ENCODE measurements at regions of chr1 and their contacts with region 1.

Region 1: GRCh38 chr1:212791676-212792395 is at the starts of genes NSL1 and TATDN3:
- DNase-seq: peak; percentile 98
- H3K4me3 Mint-ChIP-seq: peak within 1 kb of the TSS; percentile 83
- H3K27ac Mint-ChIP-seq: peak within 1 kb of the TSS; percentile 90
- H3K4me1 Mint-ChIP-seq: peaks cover 19% of the 10 kb centered on the region
- H3K27me3 Mint-ChIP-seq: no peaks in the 10 kb centered on the region
- CTCF ChIP-seq: no peak
- total RNA-seq, gene NSL1: 39.7 and 42.2 TPM in 2 replicates
- total RNA-seq, gene TATDN3: 31.5 and 35.7 TPM in 2 replicates

Region 2: DNA sequence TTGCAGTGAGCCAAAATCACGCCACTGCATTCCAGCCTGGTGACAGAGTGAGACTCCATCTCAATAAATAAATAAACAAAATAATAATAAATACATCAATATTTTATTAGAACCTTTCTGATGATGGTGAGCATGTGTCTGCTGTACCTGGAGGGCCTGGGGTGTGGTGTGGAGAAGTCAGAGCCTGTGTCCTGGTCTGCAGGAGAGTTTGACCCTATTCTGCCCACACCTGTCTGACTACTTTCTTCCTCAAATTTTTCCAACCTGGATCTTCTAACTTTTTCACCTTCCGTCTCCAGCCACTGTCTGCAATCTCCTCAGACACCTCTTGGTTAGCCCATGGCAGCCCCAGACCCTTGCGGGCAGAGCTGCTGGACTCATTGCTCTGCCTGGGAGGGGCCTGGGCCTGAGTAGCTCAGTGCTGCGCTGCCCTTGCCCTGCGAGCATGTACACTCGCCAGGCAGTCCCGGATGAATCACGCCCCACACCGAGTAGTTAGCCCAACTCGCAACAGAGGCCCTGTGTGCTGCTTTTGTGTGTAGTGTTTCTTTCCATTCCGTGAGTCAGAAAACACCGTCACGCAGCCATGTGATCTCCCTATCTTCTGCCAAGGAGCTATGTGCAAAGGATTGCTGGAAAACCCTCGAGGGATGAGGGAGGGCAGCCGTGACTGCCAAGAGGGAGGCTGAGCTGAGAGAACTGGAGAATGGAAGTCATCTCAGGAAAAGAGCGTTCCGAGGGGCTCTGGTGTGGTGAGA is 322.0 kb before region 1 on chr1:
- CTCF ChIA-PET with region 1: no interaction called
- POLR2A ChIA-PET with region 1: interaction called, 29 read pairs
- intact Hi-C with region 1: no loop called
- DNase-seq: peak; percentile 96
- H3K4me3 Mint-ChIP-seq: peak overlapping the region; percentile 49
- H3K27ac Mint-ChIP-seq: peak overlapping the region; percentile 90
- H3K4me1 Mint-ChIP-seq: peaks cover 10% of the 10 kb centered on the region
- H3K27me3 Mint-ChIP-seq: no peaks in the 10 kb centered on the region
- CTCF ChIP-seq: no peak

Region 3: DNA sequence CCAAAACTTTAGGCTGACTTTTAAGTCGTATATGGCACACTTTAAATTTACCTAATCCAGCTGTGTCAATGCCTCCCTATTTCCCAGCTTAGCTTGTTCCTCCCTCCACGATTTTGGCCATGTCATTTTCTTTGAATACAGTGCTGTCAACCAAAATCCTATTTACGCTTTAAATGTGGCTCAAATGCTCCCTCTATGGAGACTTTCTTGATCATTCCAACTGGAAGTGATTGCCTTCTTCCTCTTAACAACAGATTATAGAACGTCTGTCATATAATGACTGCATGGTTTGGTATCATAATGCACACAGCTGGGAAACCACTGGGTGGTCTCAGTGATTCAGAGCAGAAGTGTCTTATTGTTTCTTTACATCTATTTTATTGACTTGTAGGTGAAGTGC is 73.3 kb before region 1 on chr1:
- CTCF ChIA-PET with region 1: no interaction called
- POLR2A ChIA-PET with region 1: no interaction called
- intact Hi-C with region 1: no loop called
- DNase-seq: peak; percentile 42
- H3K4me3 Mint-ChIP-seq: no peak overlapping the region
- H3K27ac Mint-ChIP-seq: no peak overlapping the region
- H3K4me1 Mint-ChIP-seq: peaks cover 18% of the 10 kb centered on the region
- H3K27me3 Mint-ChIP-seq: peaks cover 39% of the 10 kb centered on the region
- CTCF ChIP-seq: no peak

Region 4: GRCh38 chr1:212743901-212744475 is 47.8 kb before region 1 on chr1:
- CTCF ChIA-PET with region 1: interaction called, 4 read pairs
- POLR2A ChIA-PET with region 1: interaction called, 24 read pairs
- intact Hi-C with region 1: no loop called
- DNase-seq: no peak
- H3K4me3 Mint-ChIP-seq: no peak overlapping the region
- H3K27ac Mint-ChIP-seq: no peak overlapping the region
- H3K4me1 Mint-ChIP-seq: no peaks in the 10 kb centered on the region
- H3K27me3 Mint-ChIP-seq: no peaks in the 10 kb centered on the region
- CTCF ChIP-seq: no peak

Region 5: GRCh38 chr1:212774584-212774983 is 17.3 kb before region 1 on chr1:
- CTCF ChIA-PET with region 1: interaction called, 6 read pairs
- POLR2A ChIA-PET with region 1: interaction called, 18 read pairs
- intact Hi-C with region 1: no loop called
- DNase-seq: peak; percentile 57
- H3K4me3 Mint-ChIP-seq: no peak overlapping the region
- H3K27ac Mint-ChIP-seq: no peak overlapping the region
- H3K4me1 Mint-ChIP-seq: peaks cover 9% of the 10 kb centered on the region
- H3K27me3 Mint-ChIP-seq: no peaks in the 10 kb centered on the region
- CTCF ChIP-seq: no peak

Region 6: GRCh38 chr1:212857992-212858460 is 66.2 kb after region 1 on chr1 and contains the start of gene FLVCR1:
- CTCF ChIA-PET with region 1: interaction called, 7 read pairs
- POLR2A ChIA-PET with region 1: interaction called, 134 read pairs
- intact Hi-C with region 1: loop called (anchors 1 kb)
- DNase-seq: peak; percentile 100
- H3K4me3 Mint-ChIP-seq: no peak within 1 kb of the TSS
- H3K27ac Mint-ChIP-seq: peak within 1 kb of the TSS; percentile 99
- H3K4me1 Mint-ChIP-seq: peaks cover 11% of the 10 kb centered on the region
- H3K27me3 Mint-ChIP-seq: no peaks in the 10 kb centered on the region
- CTCF ChIP-seq: no peak
- total RNA-seq, gene FLVCR1: 16.5 and 17.9 TPM in 2 replicates

Region 7: DNA sequence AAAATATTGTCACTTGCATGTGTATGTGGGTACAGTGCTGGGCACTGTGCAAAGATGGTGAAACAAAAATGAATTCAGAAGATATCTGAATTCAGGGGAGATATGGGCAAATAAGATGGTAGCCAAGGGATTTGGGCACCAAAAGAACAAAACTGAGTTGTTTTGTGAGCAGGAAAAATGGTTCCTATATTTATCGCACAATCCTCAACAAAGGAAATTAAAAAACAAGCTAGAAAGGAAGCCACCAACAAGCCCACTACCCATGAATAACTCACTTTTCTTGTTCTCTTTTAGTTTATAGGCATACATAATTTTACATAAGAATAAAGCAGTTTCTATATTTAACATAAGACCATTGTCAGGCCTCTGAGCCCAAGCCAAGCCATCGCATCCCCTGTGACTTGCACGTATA is 117.8 kb after region 1 on chr1:
- CTCF ChIA-PET with region 1: no interaction called
- POLR2A ChIA-PET with region 1: no interaction called
- intact Hi-C with region 1: no loop called
- DNase-seq: no peak
- H3K4me3 Mint-ChIP-seq: no peak overlapping the region
- H3K27ac Mint-ChIP-seq: no peak overlapping the region
- H3K4me1 Mint-ChIP-seq: no peaks in the 10 kb centered on the region
- H3K27me3 Mint-ChIP-seq: no peaks in the 10 kb centered on the region
- CTCF ChIP-seq: no peak

Region 8: GRCh38 chr1:212987702-212988322 is 196.0 kb after region 1 on chr1:
- CTCF ChIA-PET with region 1: interaction called, 44 read pairs
- POLR2A ChIA-PET with region 1: interaction called, 17 read pairs
- intact Hi-C with region 1: no loop called
- DNase-seq: peak; percentile 74
- H3K4me3 Mint-ChIP-seq: no peak overlapping the region
- H3K27ac Mint-ChIP-seq: peak overlapping the region; percentile 22
- H3K4me1 Mint-ChIP-seq: peaks cover 9% of the 10 kb centered on the region
- H3K27me3 Mint-ChIP-seq: no peaks in the 10 kb centered on the region
- CTCF ChIP-seq: no peak

Region 9: DNA sequence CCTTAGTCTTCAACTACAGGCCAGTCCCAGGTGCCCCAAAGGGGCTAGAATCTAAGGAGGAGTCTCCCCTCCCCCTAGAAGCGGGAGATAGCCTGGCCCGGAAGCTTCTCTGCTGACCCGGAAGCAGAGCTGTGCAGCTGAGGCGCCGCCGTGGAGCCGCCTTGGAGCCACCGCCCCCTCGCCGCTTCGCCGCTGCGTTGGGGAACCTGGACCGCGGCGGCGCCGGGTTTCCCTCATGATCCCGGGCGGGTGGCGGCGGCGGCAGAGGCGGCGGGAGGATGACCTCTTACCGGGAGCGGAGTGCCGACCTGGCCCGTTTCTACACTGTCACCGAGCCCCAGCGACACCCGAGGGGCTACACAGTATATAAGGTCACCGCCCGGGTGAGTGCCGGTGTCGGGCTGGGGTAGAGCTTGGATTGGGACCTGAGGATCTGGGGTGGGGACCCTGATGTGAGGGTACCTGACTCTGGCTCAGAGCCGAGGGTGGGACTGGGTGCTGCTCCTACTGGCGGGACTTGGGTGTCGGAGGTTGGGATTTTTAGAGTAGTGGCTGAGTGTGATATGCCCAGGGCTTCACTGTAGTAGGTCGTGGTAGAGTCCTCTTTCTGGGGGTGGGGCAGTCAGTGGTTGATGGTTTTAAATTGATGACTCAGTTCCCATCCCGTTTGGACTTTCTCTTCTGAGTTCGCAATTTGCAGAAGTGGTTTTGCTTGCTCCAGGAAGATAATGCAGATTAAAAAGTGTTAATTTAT is 259.5 kb after region 1 on chr1 and contains the start of gene RPS6KC1:
- CTCF ChIA-PET with region 1: interaction called, 4 read pairs
- POLR2A ChIA-PET with region 1: interaction called, 5 read pairs
- intact Hi-C with region 1: loop called (anchors 10 kb)
- DNase-seq: peak; percentile 92
- H3K4me3 Mint-ChIP-seq: peak within 1 kb of the TSS; percentile 94
- H3K27ac Mint-ChIP-seq: peak within 1 kb of the TSS; percentile 95
- H3K4me1 Mint-ChIP-seq: peaks cover 22% of the 10 kb centered on the region
- H3K27me3 Mint-ChIP-seq: no peaks in the 10 kb centered on the region
- CTCF ChIP-seq: peak; percentile 15
- total RNA-seq, gene RPS6KC1: 24.5 and 24.9 TPM in 2 replicates

Region 10: GRCh38 chr1:213227458-213227857 is 435.6 kb after region 1 on chr1:
- CTCF ChIA-PET with region 1: no interaction called
- POLR2A ChIA-PET with region 1: no interaction called
- intact Hi-C with region 1: no loop called
- DNase-seq: no peak
- H3K4me3 Mint-ChIP-seq: no peak overlapping the region
- H3K27ac Mint-ChIP-seq: no peak overlapping the region
- H3K4me1 Mint-ChIP-seq: no peaks in the 10 kb centered on the region
- H3K27me3 Mint-ChIP-seq: no peaks in the 10 kb centered on the region
- CTCF ChIP-seq: no peak